Heart left ventricle (tissue), 16 donors: ENCODE measurements at regions of chr2 and their contacts with region 1.

Region 1: GRCh38 chr2:61328707-61329251 is 142.1 kb downstream of the USP34 start:
- DNase-seq: no peak
- ATAC-seq: no peak
- H3K4me3 ChIP-seq: no peak overlapping the region
- H3K27ac ChIP-seq: no peak overlapping the region
- H3K4me1 ChIP-seq: no peaks in the 10 kb centered on the region
- H3K27me3 ChIP-seq: no peaks in the 10 kb centered on the region
- CTCF ChIP-seq: no peak
- POLR2A ChIP-seq: no peak

Region 2: GRCh38 chr2:61135510-61135909 is 193.3 kb before region 1 on chr2:
- intact Hi-C with region 1: no loop called
- DNase-seq: no peak
- ATAC-seq: peak in 2 of 4 donors; percentile 58
- H3K4me3 ChIP-seq: no peak overlapping the region
- H3K27ac ChIP-seq: no peak overlapping the region
- H3K4me1 ChIP-seq: no peaks in the 10 kb centered on the region
- H3K27me3 ChIP-seq: no peaks in the 10 kb centered on the region
- CTCF ChIP-seq: peak in 7 of 12 donors; percentile 10 to 46 (median 35)
- POLR2A ChIP-seq: no peak

Region 3: DNA sequence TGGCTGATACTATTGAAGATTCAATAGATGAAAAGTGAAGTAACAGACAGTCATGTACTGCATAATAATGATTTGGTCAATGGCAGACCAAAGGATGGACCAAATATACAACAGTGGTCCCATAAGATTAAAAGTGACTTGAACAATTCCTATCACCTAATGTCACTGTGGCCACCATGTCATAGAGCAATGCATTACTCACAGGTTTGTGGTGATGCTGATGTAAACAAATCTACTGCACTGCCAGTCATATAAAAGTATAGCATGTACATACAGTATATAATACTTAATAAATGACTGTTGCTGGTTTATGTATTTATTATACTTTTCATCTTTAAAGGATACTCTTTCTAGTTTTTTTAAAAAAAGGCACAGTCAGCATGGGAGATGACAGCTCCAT is 42.2 kb after region 1 on chr2:
- intact Hi-C with region 1: loop called in 1 of 10 experiments (anchors 10 kb)
- DNase-seq: no peak
- ATAC-seq: no peak
- H3K4me3 ChIP-seq: no peak overlapping the region
- H3K27ac ChIP-seq: no peak overlapping the region
- H3K4me1 ChIP-seq: no peaks in the 10 kb centered on the region
- H3K27me3 ChIP-seq: no peaks in the 10 kb centered on the region
- CTCF ChIP-seq: no peak
- POLR2A ChIP-seq: no peak

Region 4: DNA sequence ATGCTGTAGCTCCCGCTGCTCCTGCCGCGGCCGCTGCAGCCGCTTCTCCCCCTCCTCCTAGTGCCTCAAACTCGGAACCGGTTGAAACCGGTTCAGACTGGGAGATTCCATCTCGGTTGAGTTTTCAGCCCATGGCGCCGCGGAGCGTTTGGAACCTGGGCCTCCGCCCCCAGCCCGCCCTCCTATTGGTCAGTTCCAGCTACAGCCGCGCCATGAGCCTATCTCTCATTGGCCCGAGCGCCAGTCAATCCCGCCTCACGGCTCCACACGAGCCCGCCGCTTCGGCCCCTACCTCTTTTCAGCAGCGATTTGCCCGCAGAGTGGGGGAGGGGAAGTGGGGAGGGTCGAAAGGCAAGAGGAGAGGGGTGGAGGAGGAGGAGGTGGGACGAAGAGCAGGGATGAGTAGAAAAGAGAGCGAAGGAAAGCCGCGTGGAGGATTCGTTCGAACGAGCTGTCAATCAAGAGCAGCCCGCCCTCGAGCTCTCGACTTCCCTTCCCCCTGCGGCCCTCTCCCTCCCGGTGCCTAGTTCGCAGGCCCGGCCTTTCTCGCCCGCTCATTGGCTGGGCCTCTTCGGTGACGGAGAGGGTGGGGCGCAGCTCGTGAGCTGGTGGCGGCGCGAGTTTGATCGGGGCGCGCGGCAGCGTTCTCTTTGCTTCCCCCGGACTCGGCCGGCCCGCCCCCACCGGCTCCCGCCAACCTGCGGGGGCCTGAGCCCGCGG is 209.6 kb after region 1 on chr2 and contains the start of gene XPO1:
- intact Hi-C with region 1: no loop called
- DNase-seq: peak; percentile 99 to 100 (median 100)
- ATAC-seq: peak; percentile 93 to 96 (median 96)
- H3K4me3 ChIP-seq: peak within 1 kb of the TSS; percentile 60 to 90 (median 78)
- H3K27ac ChIP-seq: peak within 1 kb of the TSS; percentile 83 to 98 (median 93)
- H3K4me1 ChIP-seq: peaks cover 4 to 35% (median 26%) of the 10 kb centered on the region in 12 donors
- H3K27me3 ChIP-seq: no peaks in the 10 kb centered on the region
- CTCF ChIP-seq: no peak
- POLR2A ChIP-seq: peak in 1 of 2 donors; percentile 68
- total RNA-seq, gene XPO1: 39.2 to 89.5 (median 74.6) TPM